ENCODE measurements at regions of chr3 and their contacts with region 1.

Region 1: DNA sequence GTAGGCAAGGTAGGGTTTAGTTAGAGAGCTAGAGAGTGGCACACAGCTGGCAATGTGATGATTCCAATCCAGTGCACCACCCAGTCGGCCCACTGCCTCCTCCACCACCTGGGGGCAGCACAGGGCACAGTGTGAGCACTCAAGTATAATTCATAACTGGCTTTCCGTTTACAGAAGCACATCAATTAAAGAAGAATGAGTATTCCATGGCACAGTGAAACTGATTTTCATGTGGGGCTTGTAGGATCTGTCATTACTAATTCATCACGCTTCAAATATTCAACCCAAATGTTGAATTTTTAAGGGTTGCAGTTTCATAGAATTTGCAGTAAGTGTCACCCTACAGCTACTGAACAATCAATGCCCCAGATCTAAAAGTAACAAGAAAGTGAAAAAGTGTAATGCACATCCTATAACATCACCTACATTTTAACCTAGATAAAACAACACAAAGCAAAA is 149.9 kb downstream of the IGSF11 start:
- DNase-seq: peak; percentile 63 to 74 (median 68)
- H3K4me3 ChIP-seq: no peak overlapping the region
- H3K4me3 Mint-ChIP-seq: peak overlapping the region in 1 of 8 donors; percentile 59
- H3K27ac ChIP-seq: no peak overlapping the region
- H3K27ac Mint-ChIP-seq: no peak overlapping the region
- H3K4me1 ChIP-seq: no peaks in the 10 kb centered on the region
- H3K4me1 Mint-ChIP-seq: peaks cover 0 to 7% (median 4%) of the 10 kb centered on the region in 4 donors
- H3K27me3 ChIP-seq: no peaks in the 10 kb centered on the region
- H3K27me3 Mint-ChIP-seq: peaks cover 2 to 8% of the 10 kb centered on the region in 2 donors

Region 2: GRCh38 chr3:118868051-118868450 is 16.7 kb before region 1 on chr3:
- CTCF ChIA-PET with region 1: interaction called, 61 read pairs
- POLR2A ChIA-PET with region 1: no interaction called
- intact Hi-C with region 1: no loop called
- DNase-seq: no peak
- H3K4me3 ChIP-seq: no peak overlapping the region
- H3K4me3 Mint-ChIP-seq: no peak overlapping the region
- H3K27ac ChIP-seq: no peak overlapping the region
- H3K27ac Mint-ChIP-seq: no peak overlapping the region
- H3K4me1 ChIP-seq: no peaks in the 10 kb centered on the region
- H3K4me1 Mint-ChIP-seq: no peaks in the 10 kb centered on the region
- H3K27me3 ChIP-seq: no peaks in the 10 kb centered on the region
- H3K27me3 Mint-ChIP-seq: peaks cover 9 to 16% of the 10 kb centered on the region in 2 donors

Region 3: DNA sequence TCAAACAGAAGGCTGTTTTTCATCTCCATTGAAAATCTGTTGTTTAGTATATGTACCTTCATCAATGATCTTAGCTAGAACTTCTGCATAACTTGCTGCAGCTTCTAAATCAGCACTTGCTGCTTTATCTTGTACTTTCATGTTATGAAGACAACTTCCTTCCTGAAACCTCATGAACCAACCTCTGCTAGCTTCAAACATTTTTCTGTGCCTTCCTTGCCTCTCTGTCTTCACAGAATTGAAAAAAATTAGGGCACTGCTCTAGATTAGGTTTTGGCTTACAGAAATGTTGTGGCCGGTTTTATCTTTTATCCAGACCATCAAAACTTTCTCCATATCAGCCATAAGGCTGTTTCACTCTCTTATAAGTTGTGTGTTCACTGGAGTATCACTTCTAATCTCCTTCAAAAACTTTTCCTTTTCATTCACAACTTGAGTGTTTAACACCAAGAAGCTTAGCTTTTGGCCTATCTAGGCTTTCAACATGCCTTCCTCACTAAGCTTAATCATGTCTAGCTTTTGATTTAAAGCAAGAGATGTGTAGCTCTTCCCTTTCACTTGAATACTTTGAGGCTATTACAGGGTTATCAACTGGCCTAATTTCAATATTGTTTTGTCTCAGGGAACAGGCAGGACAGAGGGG is 71.3 kb after region 1 on chr3:
- CTCF ChIA-PET with region 1: interaction called, 20 read pairs
- POLR2A ChIA-PET with region 1: no interaction called
- intact Hi-C with region 1: loop called (anchors 2 kb)
- DNase-seq: peak in 4 of 5 donors; percentile 50 to 57 (median 52)
- H3K4me3 ChIP-seq: no peak overlapping the region
- H3K4me3 Mint-ChIP-seq: peak overlapping the region; percentile 2 to 62 (median 55)
- H3K27ac ChIP-seq: no peak overlapping the region
- H3K27ac Mint-ChIP-seq: peak overlapping the region; percentile 25 to 90 (median 70)
- H3K4me1 ChIP-seq: peaks cover 39% of the 10 kb centered on the region
- H3K4me1 Mint-ChIP-seq: peaks cover 22 to 46% (median 37%) of the 10 kb centered on the region in 4 donors
- H3K27me3 ChIP-seq: no peaks in the 10 kb centered on the region
- H3K27me3 Mint-ChIP-seq: no peaks in the 10 kb centered on the region

Region 4: DNA sequence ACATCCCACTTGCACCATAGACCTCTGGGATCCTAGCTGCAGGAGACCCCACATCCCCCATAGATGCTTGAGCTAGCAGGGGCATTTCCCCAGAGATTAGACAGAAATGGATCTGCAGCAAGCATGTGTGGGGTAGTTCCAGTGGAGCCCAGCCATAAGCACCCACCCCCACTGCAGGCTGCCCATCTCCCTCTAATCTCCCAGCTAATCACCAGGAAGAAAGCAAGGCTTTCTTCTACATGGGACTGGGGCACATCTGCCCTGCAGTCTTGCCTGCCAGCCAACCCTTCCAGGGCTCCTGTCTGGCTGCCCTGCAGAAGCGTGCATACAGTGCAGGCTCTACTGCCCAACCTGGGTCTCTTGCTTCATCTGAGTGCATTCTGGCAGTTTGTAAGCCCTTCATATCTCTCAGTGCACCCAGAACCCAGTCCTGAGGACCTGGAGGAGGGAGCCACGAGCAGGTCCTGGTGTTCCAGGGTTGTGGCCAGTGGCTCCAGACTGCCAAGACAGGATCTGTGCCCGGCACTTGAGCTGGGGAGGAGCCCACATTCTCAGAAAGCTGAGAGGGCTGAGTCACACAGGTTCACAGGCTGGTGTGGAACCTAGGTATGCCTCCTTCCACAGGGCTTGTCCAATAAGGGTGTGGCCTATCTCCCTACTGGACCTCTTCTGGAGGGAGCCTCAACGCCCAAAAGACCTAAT is 199.7 kb after region 1 on chr3:
- CTCF ChIA-PET with region 1: interaction called, 23 read pairs
- POLR2A ChIA-PET with region 1: no interaction called
- intact Hi-C with region 1: no loop called
- DNase-seq: no peak
- H3K4me3 ChIP-seq: no peak overlapping the region
- H3K4me3 Mint-ChIP-seq: no peak overlapping the region
- H3K27ac ChIP-seq: no peak overlapping the region
- H3K27ac Mint-ChIP-seq: no peak overlapping the region
- H3K4me1 ChIP-seq: no peaks in the 10 kb centered on the region
- H3K4me1 Mint-ChIP-seq: peaks cover 0 to 2% (median 0%) of the 10 kb centered on the region in 4 donors
- H3K27me3 ChIP-seq: no peaks in the 10 kb centered on the region
- H3K27me3 Mint-ChIP-seq: peaks cover 0 to 3% of the 10 kb centered on the region in 2 donors

Region 5: GRCh38 chr3:119240591-119241434 is 356.0 kb after region 1 on chr3 and contains the start of gene B4GALT4:
- CTCF ChIA-PET with region 1: interaction called, 120 read pairs
- POLR2A ChIA-PET with region 1: interaction called, 6 read pairs
- intact Hi-C with region 1: no loop called
- DNase-seq: peak; percentile 57 to 74 (median 67)
- H3K4me3 ChIP-seq: peak within 1 kb of the TSS; percentile 42 to 66
- H3K4me3 Mint-ChIP-seq: peak within 1 kb of the TSS; percentile 76 to 95 (median 88)
- H3K27ac ChIP-seq: peak within 1 kb of the TSS; percentile 77
- H3K27ac Mint-ChIP-seq: peak within 1 kb of the TSS; percentile 69 to 97 (median 94)
- H3K4me1 ChIP-seq: peaks cover 50% of the 10 kb centered on the region
- H3K4me1 Mint-ChIP-seq: peaks cover 23 to 46% (median 31%) of the 10 kb centered on the region in 4 donors
- H3K27me3 ChIP-seq: no peaks in the 10 kb centered on the region
- H3K27me3 Mint-ChIP-seq: no peaks in the 10 kb centered on the region
- total RNA-seq, gene B4GALT4: 15.9 to 18.1 TPM

Region 6: GRCh38 chr3:119676771-119677640 is 792.2 kb after region 1 on chr3 and contains the start of gene COX17:
- CTCF ChIA-PET with region 1: interaction called, 42 read pairs
- POLR2A ChIA-PET with region 1: no interaction called
- intact Hi-C with region 1: no loop called
- DNase-seq: peak; percentile 94 to 99 (median 97)
- H3K4me3 ChIP-seq: peak within 1 kb of the TSS; percentile 72 to 89
- H3K4me3 Mint-ChIP-seq: peak within 1 kb of the TSS; percentile 83 to 97 (median 91)
- H3K27ac ChIP-seq: peak within 1 kb of the TSS; percentile 69
- H3K27ac Mint-ChIP-seq: peak within 1 kb of the TSS; percentile 87 to 99 (median 96)
- H3K4me1 ChIP-seq: peaks cover 34% of the 10 kb centered on the region
- H3K4me1 Mint-ChIP-seq: peaks cover 27 to 42% (median 32%) of the 10 kb centered on the region in 4 donors
- H3K27me3 ChIP-seq: no peaks in the 10 kb centered on the region
- H3K27me3 Mint-ChIP-seq: no peaks in the 10 kb centered on the region
- total RNA-seq, gene COX17: 46.1 to 48.9 TPM

Measured in CD4-positive, alpha-beta memory T cell (primary cell).